Naive thymus-derived CD8-positive, alpha-beta T cell (primary cell): ENCODE measurements at regions of chr15 and their contacts with region 1.

Region 1: GRCh38 chr15:50880651-50881114 is 27.8 kb upstream of the AP4E1 start:
- DNase-seq: peak in 2 of 10 donors; percentile 15 to 27
- ATAC-seq: peak; percentile 44 to 54
- H3K4me3 Mint-ChIP-seq: peak overlapping the region in 3 of 10 donors; percentile 13 to 62 (median 22)
- H3K27ac Mint-ChIP-seq: peak overlapping the region in 8 of 10 donors; percentile 4 to 91 (median 76)
- H3K4me1 Mint-ChIP-seq: peaks cover 8 to 51% (median 21%) of the 10 kb centered on the region in 4 donors
- H3K27me3 Mint-ChIP-seq: no peaks in the 10 kb centered on the region

Region 2: DNA sequence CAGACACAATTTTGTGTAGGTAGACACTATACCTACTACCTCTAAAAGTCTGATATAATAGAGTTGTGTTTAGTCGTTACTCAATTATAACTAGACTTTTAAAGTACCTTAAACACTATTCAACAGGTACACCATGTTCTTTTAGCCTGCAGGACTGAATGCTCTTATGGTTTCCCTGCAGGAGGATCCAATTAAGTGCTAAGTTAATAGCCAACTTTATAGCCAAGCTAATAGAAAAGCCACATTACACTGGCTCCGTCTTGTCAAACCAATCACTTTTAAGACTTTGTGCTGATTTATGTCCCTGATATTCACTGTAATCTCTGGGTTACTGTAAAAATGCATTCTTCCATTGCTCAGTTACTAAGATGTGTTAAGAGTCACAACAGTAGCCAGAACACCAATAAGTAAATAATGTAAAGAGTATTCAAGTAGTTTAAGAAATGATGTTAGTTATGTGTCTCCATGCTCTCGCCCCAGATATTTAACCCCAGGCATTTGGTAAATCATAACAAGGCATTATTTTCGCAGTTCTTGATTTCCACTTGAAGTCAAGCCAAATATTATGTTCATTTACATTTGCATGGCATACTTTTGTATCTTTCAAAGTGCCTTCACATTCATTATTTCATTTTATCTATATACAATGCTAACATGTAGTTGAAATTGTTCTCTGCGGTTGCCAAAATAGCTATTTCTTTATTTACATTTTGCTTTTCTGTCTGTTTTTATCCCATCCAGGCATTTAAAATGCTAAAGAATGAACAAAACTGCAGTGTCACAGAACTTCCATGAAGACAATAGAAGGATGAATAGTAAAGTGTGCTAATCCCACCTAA is 14.9 kb before region 1 on chr15:
- POLR2A ChIA-PET with region 1: no interaction called
- DNase-seq: no peak
- ATAC-seq: no peak
- H3K4me3 Mint-ChIP-seq: no peak overlapping the region
- H3K27ac Mint-ChIP-seq: no peak overlapping the region
- H3K4me1 Mint-ChIP-seq: no peaks in the 10 kb centered on the region
- H3K27me3 Mint-ChIP-seq: peaks cover 0 to 1% (median 0%) of the 10 kb centered on the region in 5 donors

Region 3: GRCh38 chr15:50908210-50909009 is 27.7 kb after region 1 on chr15 and contains the start of gene AP4E1:
- POLR2A ChIA-PET with region 1: interaction called, 19 read pairs
- DNase-seq: peak; percentile 91 to 97 (median 96)
- ATAC-seq: peak; percentile 60 to 63
- H3K4me3 Mint-ChIP-seq: peak within 1 kb of the TSS; percentile 87 to 99 (median 94)
- H3K27ac Mint-ChIP-seq: peak within 1 kb of the TSS; percentile 93 to 99 (median 98)
- H3K4me1 Mint-ChIP-seq: peaks cover 6 to 45% (median 30%) of the 10 kb centered on the region in 4 donors
- H3K27me3 Mint-ChIP-seq: no peaks in the 10 kb centered on the region
- polyA plus RNA-seq, gene AP4E1: 3.6 to 4.2 (median 3.7) TPM

Region 4: GRCh38 chr15:51060030-51060673 is 179.5 kb after region 1 on chr15:
- POLR2A ChIA-PET with region 1: no interaction called
- DNase-seq: no peak
- ATAC-seq: no peak
- H3K4me3 Mint-ChIP-seq: no peak overlapping the region
- H3K27ac Mint-ChIP-seq: no peak overlapping the region
- H3K4me1 Mint-ChIP-seq: no peaks in the 10 kb centered on the region
- H3K27me3 Mint-ChIP-seq: peaks cover 6 to 45% (median 17%) of the 10 kb centered on the region in 5 donors